Aorta (tissue), 5 donors: ENCODE measurements at regions of chr1 and their contacts with region 1.

Region 1: DNA sequence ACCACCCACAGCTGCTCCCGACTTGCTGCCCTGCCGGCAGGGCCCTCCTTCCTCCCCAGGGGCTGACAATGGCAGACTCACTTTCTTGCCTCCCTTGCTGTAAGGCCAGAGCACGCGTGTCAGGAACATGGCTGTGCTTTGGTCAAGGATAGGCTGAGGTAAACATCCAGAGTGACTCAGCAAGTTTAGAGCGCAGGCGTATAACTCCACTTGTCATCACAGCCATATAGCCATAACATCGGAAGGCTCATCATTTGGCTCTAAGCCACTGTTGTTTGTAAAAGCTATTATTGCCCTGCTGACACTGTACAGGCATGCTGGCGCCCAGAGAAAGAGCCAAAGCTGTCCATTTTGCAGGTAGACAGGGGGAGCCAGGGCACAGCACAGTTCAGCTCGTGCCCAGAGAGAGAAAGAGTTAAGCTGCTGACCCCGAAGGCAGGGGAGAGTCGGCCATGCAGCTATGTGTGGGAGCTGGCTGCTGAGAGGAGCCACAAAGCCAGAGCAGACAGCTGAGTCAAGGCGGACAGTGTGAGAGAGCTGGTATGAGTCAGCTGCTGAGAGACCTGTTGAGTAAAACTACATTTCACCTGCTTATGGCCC is 60.6 kb downstream of the GNG4 start:
- DNase-seq: no peak
- ATAC-seq: no peak
- H3K4me3 ChIP-seq: no peak overlapping the region
- H3K27ac ChIP-seq: no peak overlapping the region
- H3K4me1 ChIP-seq: no peaks in the 10 kb centered on the region
- H3K27me3 ChIP-seq: no peaks in the 10 kb centered on the region

Region 2: DNA sequence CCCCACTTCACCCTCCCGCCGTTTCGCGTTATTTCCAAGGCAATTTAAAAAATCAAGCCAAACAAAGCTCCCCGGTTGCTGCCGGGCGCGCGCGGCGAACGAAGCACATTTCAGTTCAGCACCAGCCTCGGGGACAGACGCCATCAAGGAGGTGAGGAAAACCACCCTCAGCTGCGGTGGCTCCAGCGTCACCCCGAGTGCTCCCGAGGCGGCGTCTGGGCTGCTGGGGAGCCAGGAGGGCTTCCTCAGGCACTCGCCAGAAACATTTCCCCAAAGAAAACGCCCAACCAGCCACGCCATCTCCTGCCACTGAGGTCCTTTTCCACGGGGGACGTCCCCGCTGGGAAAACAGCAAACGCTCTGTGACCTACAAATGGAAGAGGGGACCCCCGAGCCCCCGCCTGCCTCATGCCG is 59.9 kb after region 1 on chr1:
- intact Hi-C with region 1: loop called in 1 of 2 experiments (anchors 10 kb)
- DNase-seq: peak; percentile 68 to 84
- ATAC-seq: peak; percentile 78
- H3K4me3 ChIP-seq: peak overlapping the region in 1 of 2 donors; percentile 53
- H3K27ac ChIP-seq: no peak overlapping the region
- H3K4me1 ChIP-seq: no peaks in the 10 kb centered on the region
- H3K27me3 ChIP-seq: no peaks in the 10 kb centered on the region

Region 3: GRCh38 chr1:236124956-236125355 is 535.9 kb after region 1 on chr1:
- intact Hi-C with region 1: no loop called
- DNase-seq: no peak
- ATAC-seq: no peak
- H3K4me3 ChIP-seq: no peak overlapping the region
- H3K27ac ChIP-seq: no peak overlapping the region
- H3K4me1 ChIP-seq: no peaks in the 10 kb centered on the region
- H3K27me3 ChIP-seq: no peaks in the 10 kb centered on the region